AG04450 (cell line): ENCODE measurements at regions of chr4 and their contacts with region 1.

Region 1: DNA sequence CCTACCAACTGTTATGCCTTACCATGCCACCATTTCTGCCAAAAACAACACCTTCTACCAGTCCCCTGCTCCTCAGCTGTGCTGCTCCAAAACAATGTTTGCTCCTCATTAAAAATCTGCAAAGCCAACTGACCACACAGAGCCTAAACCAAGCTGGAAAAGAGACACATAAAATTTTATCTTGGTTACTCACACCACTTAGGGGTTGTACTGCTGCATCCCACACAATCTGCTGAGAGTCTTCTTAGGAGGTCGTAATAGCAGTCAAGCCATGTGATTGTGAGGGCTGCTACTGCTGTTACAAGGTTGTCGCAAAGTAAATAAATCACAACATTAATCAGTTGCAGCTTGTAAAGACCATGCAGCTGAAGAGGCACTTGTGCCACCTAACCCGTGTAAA is 607.4 kb upstream of the FAM241A start:
- DNase-seq: peak; percentile 8
- H3K4me3 ChIP-seq: no peak overlapping the region
- H3K27ac ChIP-seq: no peak overlapping the region
- H3K27me3 ChIP-seq: no peaks in the 10 kb centered on the region
- CTCF ChIP-seq: no peak

Region 2: GRCh38 chr4:111494971-111495370 is 42.9 kb before region 1 on chr4:
- CTCF ChIA-PET with region 1: no interaction called
- POLR2A ChIA-PET with region 1: interaction called, 12 read pairs
- DNase-seq: no peak
- H3K4me3 ChIP-seq: no peak overlapping the region
- H3K27ac ChIP-seq: no peak overlapping the region
- H3K27me3 ChIP-seq: no peaks in the 10 kb centered on the region
- CTCF ChIP-seq: no peak